Panc1 (cell line): ENCODE measurements at regions of chr17 and their contacts with region 1.

Region 1: DNA sequence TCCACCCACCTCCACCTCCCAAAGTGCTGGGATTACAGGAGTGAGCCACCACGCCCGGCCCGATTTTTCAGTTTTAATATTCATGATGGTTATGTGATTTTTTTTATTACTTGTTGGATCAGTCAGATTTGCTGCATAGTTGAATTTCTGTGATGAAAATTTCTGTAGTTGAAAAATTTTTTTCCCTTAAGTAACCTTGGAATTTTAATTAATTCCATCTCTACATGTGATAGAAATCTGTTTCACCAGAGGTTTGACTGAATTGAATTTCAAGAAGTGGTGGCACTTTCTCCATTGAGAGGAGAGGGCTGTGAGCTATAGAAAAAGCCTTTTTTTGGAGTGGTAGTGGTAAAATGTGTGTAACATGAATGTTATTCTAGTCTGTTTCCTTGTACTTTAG is 24.7 kb downstream of the WIPF2 start:
- DNase-seq: no peak
- ATAC-seq: no peak
- H3K4me3 ChIP-seq: no peak overlapping the region
- H3K27ac ChIP-seq: no peak overlapping the region
- H3K4me1 ChIP-seq: no peaks in the 10 kb centered on the region
- H3K27me3 ChIP-seq: no peaks in the 10 kb centered on the region
- CTCF ChIP-seq: no peak

Region 2: DNA sequence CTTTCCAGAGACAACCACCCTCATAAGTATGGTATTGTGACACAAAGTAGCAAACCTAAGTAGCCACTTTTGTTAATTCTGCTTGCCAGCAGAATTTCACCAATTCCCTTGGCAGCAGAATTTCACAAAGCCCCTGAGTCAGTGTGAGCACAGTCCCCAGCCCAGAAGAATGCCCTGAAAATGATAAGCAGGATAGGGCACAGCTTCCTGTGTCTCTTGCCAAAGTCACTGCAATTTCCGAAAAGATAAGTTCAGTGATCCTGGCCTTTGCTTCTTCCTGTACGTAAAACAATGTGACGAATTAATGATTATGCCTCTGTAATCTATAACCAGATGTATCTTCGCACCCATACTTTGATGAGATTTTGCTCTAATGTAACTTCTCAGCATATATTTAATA is 40.6 kb before region 1 on chr17:
- CTCF ChIA-PET with region 1: interaction called, 10 read pairs
- POLR2A ChIA-PET with region 1: no interaction called
- in situ Hi-C with region 1: no loop called
- intact Hi-C with region 1: no loop called
- DNase-seq: no peak
- ATAC-seq: no peak
- H3K4me3 ChIP-seq: no peak overlapping the region
- H3K27ac ChIP-seq: no peak overlapping the region
- H3K4me1 ChIP-seq: no peaks in the 10 kb centered on the region
- H3K27me3 ChIP-seq: no peaks in the 10 kb centered on the region
- CTCF ChIP-seq: no peak